ENCODE measurements at regions of chr13 and their contacts with region 1.

Region 1: DNA sequence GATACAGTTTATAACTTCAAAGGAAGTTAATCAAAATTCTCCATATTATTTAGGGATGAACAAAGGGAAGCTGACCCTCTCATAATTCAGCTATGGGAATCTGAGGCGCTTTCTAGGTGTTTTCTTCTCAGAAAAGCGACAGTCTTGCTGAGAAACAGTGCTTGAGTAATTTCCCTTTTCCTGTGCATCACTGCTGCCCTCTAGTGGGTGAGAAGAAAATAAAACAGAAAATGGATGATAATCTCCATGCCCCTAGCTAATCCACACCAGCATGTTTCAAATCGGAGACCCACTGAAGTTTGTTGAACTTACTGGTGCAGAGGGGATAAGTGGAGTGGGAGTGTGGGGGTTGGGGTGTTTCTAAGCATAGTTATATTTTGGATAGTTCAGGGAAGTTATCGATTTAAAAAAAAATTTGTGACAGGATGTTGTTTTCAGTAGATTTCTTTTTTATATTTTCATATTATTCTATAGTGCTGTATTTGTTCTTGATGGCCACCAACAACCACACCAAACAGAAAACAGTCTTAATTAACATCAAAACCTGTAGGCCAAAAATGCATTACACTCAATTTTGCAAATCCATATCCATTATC is 21.4 kb downstream of the LCP1 start:
- DNase-seq: no peak
- ATAC-seq: peak; percentile 45
- H3K4me3 Mint-ChIP-seq: peak overlapping the region; percentile 70
- H3K27ac Mint-ChIP-seq: peak overlapping the region; percentile 88
- H3K4me1 Mint-ChIP-seq: peaks cover 61% of the 10 kb centered on the region
- H3K27me3 Mint-ChIP-seq: no peaks in the 10 kb centered on the region
- CTCF ChIP-seq: no peak

Region 2: DNA sequence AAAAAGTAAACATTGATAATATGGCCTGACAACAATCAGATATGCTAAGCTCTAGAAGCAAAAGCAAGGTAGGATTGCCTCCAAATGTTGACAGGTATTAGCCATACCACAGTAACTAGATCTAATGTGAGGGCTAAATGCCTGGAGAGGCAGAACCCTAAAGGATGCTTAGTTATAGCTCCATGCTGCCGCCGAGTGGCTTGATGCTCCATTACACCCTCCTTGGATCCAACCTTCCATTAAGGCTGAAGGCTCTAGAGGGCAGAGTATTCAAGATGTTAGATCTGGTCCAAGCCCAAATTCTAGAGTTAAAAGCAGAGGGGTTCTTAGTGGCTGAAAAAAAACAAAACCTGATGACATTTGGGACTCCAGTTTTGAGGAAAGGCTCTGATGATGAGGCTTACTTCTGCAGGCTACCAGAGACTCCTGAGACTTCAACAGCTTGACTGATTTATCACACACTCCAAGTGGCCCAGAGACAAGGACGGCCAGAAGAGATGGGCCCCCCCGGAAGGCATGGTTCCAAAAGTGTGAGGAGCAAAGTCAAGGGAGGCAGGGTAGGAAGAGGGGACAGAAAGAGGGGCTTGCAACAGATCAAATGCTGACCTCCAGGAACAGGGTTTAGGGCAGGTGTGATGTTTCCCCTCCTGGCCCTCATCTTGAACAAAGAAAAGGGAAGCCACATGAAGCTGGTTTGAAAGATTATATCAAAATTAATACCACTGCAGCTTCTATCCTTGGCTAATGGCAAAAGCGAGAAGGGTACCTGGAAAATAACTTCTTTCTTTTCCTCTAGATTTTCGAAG is 33.8 kb before region 1 on chr13:
- CTCF ChIA-PET with region 1: interaction called, 4 read pairs
- POLR2A ChIA-PET with region 1: no interaction called
- intact Hi-C with region 1: loop called (anchors 2 kb)
- DNase-seq: peak; percentile 27
- ATAC-seq: peak; percentile 89
- H3K4me3 Mint-ChIP-seq: no peak overlapping the region
- H3K27ac Mint-ChIP-seq: peak overlapping the region; percentile 9
- H3K4me1 Mint-ChIP-seq: peaks cover 30% of the 10 kb centered on the region
- H3K27me3 Mint-ChIP-seq: no peaks in the 10 kb centered on the region
- CTCF ChIP-seq: no peak

Region 3: GRCh38 chr13:46146899-46147298 is 13.7 kb before region 1 on chr13:
- CTCF ChIA-PET with region 1: interaction called, 15 read pairs
- POLR2A ChIA-PET with region 1: no interaction called
- intact Hi-C with region 1: loop called (anchors 2 kb)
- DNase-seq: no peak
- ATAC-seq: no peak
- H3K4me3 Mint-ChIP-seq: no peak overlapping the region
- H3K27ac Mint-ChIP-seq: no peak overlapping the region
- H3K4me1 Mint-ChIP-seq: peaks cover 4% of the 10 kb centered on the region
- H3K27me3 Mint-ChIP-seq: no peaks in the 10 kb centered on the region
- CTCF ChIP-seq: no peak

Region 4: GRCh38 chr13:46176756-46177155 is 16.2 kb after region 1 on chr13:
- CTCF ChIA-PET with region 1: interaction called, 28 read pairs
- POLR2A ChIA-PET with region 1: interaction called, 247 read pairs
- intact Hi-C with region 1: no loop called
- DNase-seq: no peak
- ATAC-seq: peak; percentile 46
- H3K4me3 Mint-ChIP-seq: peak overlapping the region; percentile 99
- H3K27ac Mint-ChIP-seq: peak overlapping the region; percentile 69
- H3K4me1 Mint-ChIP-seq: peaks cover 82% of the 10 kb centered on the region
- H3K27me3 Mint-ChIP-seq: no peaks in the 10 kb centered on the region
- CTCF ChIP-seq: no peak